ENCODE measurements at regions of chr14 and their contacts with region 1.

Region 1: GRCh38 chr14:81990312-81990761 is 456.7 kb upstream of the SEL1L start:
- DNase-seq: peak; percentile 33
- ATAC-seq: peak; percentile 45; the same call in 1 of the 3 replicates
- H3K4me3 ChIP-seq: no peak overlapping the region
- H3K27ac ChIP-seq: no peak overlapping the region
- H3K4me1 ChIP-seq: peaks cover 11% of the 10 kb centered on the region
- H3K27me3 ChIP-seq: no peaks in the 10 kb centered on the region
- CTCF ChIP-seq: peak; percentile 80
- EP300 ChIP-seq: no peak
- POLR2A ChIP-seq: no peak
- RAD21 ChIP-seq: peak; percentile 64

Region 2: GRCh38 chr14:81565441-81566290 is 424.7 kb before region 1 on chr14:
- CTCF ChIA-PET with region 1: no interaction called
- POLR2A ChIA-PET with region 1: no interaction called
- in situ Hi-C with region 1: no loop called
- intact Hi-C with region 1: loop called (anchors 5 kb)
- DNase-seq: peak; percentile 24
- ATAC-seq: peak; percentile 79
- H3K4me3 ChIP-seq: no peak overlapping the region
- H3K27ac ChIP-seq: no peak overlapping the region
- H3K4me1 ChIP-seq: no peaks in the 10 kb centered on the region
- H3K27me3 ChIP-seq: peaks cover 0 to 6% of the 10 kb centered on the region in 2 experiments; a peak in 1 of 5 replicates
- CTCF ChIP-seq: peak; percentile 75
- EP300 ChIP-seq: no peak
- POLR2A ChIP-seq: no peak
- RAD21 ChIP-seq: peak; percentile 29; the same call in 1 of the 2 replicates

Region 3: GRCh38 chr14:81625343-81625742 is 365.0 kb before region 1 on chr14:
- CTCF ChIA-PET with region 1: no interaction called
- POLR2A ChIA-PET with region 1: no interaction called
- in situ Hi-C with region 1: no loop called
- intact Hi-C with region 1: loop called (anchors 5 kb)
- DNase-seq: peak; percentile 28
- ATAC-seq: peak; percentile 70
- H3K4me3 ChIP-seq: no peak overlapping the region
- H3K27ac ChIP-seq: no peak overlapping the region
- H3K4me1 ChIP-seq: no peaks in the 10 kb centered on the region
- H3K27me3 ChIP-seq: no peaks in the 10 kb centered on the region
- CTCF ChIP-seq: peak; percentile 61
- EP300 ChIP-seq: no peak
- POLR2A ChIP-seq: no peak
- RAD21 ChIP-seq: no peak; the same call in 1 of the 2 replicates

Region 4: GRCh38 chr14:81710234-81710845 is 280.0 kb before region 1 on chr14:
- CTCF ChIA-PET with region 1: no interaction called
- POLR2A ChIA-PET with region 1: no interaction called
- in situ Hi-C with region 1: no loop called
- intact Hi-C with region 1: loop called (anchors 1 kb)
- DNase-seq: peak; percentile 42
- ATAC-seq: peak; percentile 58; the same call in 1 of the 3 replicates
- H3K4me3 ChIP-seq: no peak overlapping the region
- H3K27ac ChIP-seq: no peak overlapping the region
- H3K4me1 ChIP-seq: no peaks in the 10 kb centered on the region
- H3K27me3 ChIP-seq: no peaks in the 10 kb centered on the region
- CTCF ChIP-seq: peak; percentile 76
- EP300 ChIP-seq: no peak
- POLR2A ChIP-seq: no peak
- RAD21 ChIP-seq: no peak

Region 5: GRCh38 chr14:81890020-81890419 is 100.3 kb before region 1 on chr14:
- CTCF ChIA-PET with region 1: no interaction called
- POLR2A ChIA-PET with region 1: no interaction called
- in situ Hi-C with region 1: no loop called
- intact Hi-C with region 1: no loop called
- DNase-seq: no peak
- ATAC-seq: no peak
- H3K4me3 ChIP-seq: no peak overlapping the region
- H3K27ac ChIP-seq: no peak overlapping the region
- H3K4me1 ChIP-seq: no peaks in the 10 kb centered on the region
- H3K27me3 ChIP-seq: no peaks in the 10 kb centered on the region
- CTCF ChIP-seq: no peak
- EP300 ChIP-seq: no peak
- POLR2A ChIP-seq: no peak
- RAD21 ChIP-seq: no peak

Region 6: GRCh38 chr14:81971911-81972310 is 18.4 kb before region 1 on chr14:
- CTCF ChIA-PET with region 1: no interaction called
- POLR2A ChIA-PET with region 1: no interaction called
- in situ Hi-C with region 1: no loop called
- intact Hi-C with region 1: no loop called
- DNase-seq: no peak
- ATAC-seq: no peak
- H3K4me3 ChIP-seq: no peak overlapping the region
- H3K27ac ChIP-seq: no peak overlapping the region
- H3K4me1 ChIP-seq: no peaks in the 10 kb centered on the region
- H3K27me3 ChIP-seq: no peaks in the 10 kb centered on the region
- CTCF ChIP-seq: no peak
- EP300 ChIP-seq: no peak
- POLR2A ChIP-seq: no peak
- RAD21 ChIP-seq: no peak

Region 7: GRCh38 chr14:82488473-82488872 is 498.1 kb after region 1 on chr14:
- CTCF ChIA-PET with region 1: no interaction called
- POLR2A ChIA-PET with region 1: no interaction called
- in situ Hi-C with region 1: no loop called
- intact Hi-C with region 1: no loop called
- DNase-seq: no peak
- ATAC-seq: no peak
- H3K4me3 ChIP-seq: no peak overlapping the region
- H3K27ac ChIP-seq: no peak overlapping the region
- H3K4me1 ChIP-seq: no peaks in the 10 kb centered on the region
- H3K27me3 ChIP-seq: no peaks in the 10 kb centered on the region
- CTCF ChIP-seq: no peak
- EP300 ChIP-seq: no peak
- POLR2A ChIP-seq: no peak
- RAD21 ChIP-seq: no peak

Measured in HepG2 (cell line).